IMR-90 (cell line): ENCODE measurements at regions of chr12 and their contacts with region 1.

Region 1: DNA sequence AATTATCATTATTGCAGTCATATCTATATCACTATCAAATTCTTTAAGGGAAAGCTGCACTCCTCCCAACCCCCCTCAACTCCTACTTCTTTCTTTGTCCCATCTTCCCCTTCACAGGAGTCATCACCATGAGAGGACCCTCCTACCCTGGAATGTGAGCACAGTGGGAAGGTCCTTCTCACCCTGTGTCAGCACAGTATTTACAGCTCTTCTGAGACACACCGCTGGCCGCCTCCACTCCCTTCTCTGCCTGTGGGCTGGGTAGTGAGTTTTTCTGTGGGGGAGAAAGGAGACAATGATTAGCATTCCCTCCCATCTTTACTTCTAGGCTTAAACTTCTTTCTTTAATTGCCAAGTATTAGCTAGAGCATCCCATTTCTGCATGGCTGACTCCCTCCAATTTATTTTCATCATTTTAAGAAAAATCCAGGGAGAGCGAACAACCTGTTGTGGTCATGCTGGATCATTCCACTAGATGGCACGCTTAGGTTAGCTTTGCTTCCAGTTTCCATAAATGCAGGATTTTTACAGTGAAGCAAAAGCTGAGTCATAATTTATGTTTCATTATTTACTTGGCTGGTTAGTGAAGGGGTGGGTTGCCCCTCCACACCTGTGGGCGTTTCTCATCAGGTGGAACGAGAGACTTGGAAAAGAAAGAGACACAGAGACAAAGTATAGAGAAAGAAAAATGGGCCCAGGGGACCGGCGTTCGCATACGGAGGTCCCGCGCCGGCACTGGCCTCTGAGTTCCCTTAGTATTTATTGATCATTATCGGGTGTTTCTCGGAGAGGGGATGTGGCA is 188.5 kb downstream of the ALX1 start:
- DNase-seq: peak; percentile 68
- ATAC-seq: peak; percentile 95
- H3K4me3 ChIP-seq: peak overlapping the region; percentile 39
- H3K27ac ChIP-seq: no peak overlapping the region
- H3K4me1 ChIP-seq: no peaks in the 10 kb centered on the region
- H3K27me3 ChIP-seq: no peaks in the 10 kb centered on the region
- CTCF ChIP-seq: peak; percentile 94
- POLR2A ChIP-seq: no peak
- RAD21 ChIP-seq: peak; percentile 93

Region 2: DNA sequence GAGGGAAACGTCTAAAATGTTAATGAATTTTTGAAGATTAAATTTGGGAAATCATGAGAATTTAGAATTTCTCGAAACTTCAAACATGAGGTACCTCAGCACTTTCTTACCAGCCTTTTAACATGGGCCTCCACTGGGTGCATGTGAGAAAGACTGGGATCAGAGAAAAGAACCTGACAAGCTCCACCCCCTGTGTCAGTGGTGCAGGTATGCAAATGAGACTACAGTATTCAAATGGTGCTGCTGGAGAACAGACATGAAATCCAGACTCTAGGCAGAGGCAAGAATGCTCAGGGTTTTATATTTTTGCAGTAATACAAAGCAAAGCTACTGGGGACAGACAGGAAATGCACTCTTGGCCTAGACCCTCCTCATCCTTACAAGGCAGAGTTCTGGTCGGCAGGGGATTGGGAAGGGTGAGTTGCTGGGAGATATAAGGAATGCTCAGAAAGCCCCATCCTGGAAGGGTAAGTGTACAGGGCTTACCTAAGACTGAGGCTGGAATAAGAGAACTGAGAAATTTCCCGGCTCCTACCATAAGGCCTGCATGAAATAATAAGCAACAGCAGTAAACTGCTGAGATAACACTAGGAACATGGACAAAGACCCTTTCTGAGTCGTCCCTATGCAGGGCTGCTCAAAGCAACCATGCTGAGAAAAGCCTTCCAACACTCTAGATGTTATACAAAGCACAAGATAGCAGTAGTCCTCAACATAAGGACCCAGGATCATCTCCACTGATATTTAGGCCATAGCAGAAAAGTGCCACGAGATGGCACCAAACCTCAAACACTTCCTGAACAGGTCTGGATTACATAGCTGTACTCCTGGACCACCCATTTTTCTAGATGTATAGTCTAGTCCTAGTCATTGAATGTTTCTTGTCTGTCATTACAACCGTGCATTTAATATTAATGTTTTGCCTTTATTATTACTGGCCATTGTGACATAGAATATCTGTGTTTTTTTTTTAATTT is 106.9 kb after region 1 on chr12:
- CTCF ChIA-PET with region 1: interaction called, 3 read pairs
- POLR2A ChIA-PET with region 1: no interaction called
- dilution Hi-C with region 1: no loop called
- in situ Hi-C with region 1: no loop called
- intact Hi-C with region 1: loop called (anchors 5 kb)
- DNase-seq: peak; percentile 64
- ATAC-seq: peak; percentile 97
- H3K4me3 ChIP-seq: no peak overlapping the region
- H3K27ac ChIP-seq: no peak overlapping the region
- H3K4me1 ChIP-seq: no peaks in the 10 kb centered on the region
- H3K27me3 ChIP-seq: no peaks in the 10 kb centered on the region
- CTCF ChIP-seq: peak; percentile 77
- POLR2A ChIP-seq: no peak
- RAD21 ChIP-seq: peak; percentile 76

Region 3: DNA sequence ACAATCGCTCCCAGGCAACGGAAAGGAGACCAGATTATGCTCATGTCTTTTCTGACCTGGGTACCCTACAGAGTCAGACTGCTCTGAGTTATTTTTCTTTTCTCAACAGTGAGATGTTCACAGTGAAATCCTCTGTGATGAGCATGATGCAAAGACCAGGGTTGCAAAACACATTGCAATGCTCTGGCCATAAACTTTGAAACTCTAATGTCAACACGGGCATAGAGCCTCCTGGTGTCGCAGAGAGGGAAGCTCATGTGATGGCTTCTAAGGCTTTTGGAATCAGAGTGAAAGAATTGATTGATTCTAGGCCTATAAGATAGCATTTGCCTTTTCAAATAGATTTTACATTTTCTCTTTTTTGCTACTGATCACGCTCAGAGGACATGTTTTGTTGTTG is 174.3 kb after region 1 on chr12:
- CTCF ChIA-PET with region 1: no interaction called
- POLR2A ChIA-PET with region 1: no interaction called
- dilution Hi-C with region 1: no loop called
- in situ Hi-C with region 1: no loop called
- intact Hi-C with region 1: loop called (anchors 5 kb)
- DNase-seq: peak; percentile 78
- ATAC-seq: peak; percentile 98
- H3K4me3 ChIP-seq: no peak overlapping the region
- H3K27ac ChIP-seq: no peak overlapping the region
- H3K4me1 ChIP-seq: no peaks in the 10 kb centered on the region
- H3K27me3 ChIP-seq: no peaks in the 10 kb centered on the region
- CTCF ChIP-seq: peak; percentile 61
- POLR2A ChIP-seq: no peak
- RAD21 ChIP-seq: peak; percentile 51

Region 4: GRCh38 chr12:85866986-85867776 is 398.6 kb after region 1 on chr12:
- CTCF ChIA-PET with region 1: interaction called, 15 read pairs
- POLR2A ChIA-PET with region 1: no interaction called
- dilution Hi-C with region 1: no loop called
- in situ Hi-C with region 1: loop called (anchors 5 kb)
- intact Hi-C with region 1: loop called (anchors 1 kb)
- DNase-seq: peak; percentile 61
- ATAC-seq: peak; percentile 92
- H3K4me3 ChIP-seq: no peak overlapping the region
- H3K27ac ChIP-seq: no peak overlapping the region
- H3K4me1 ChIP-seq: no peaks in the 10 kb centered on the region
- H3K27me3 ChIP-seq: no peaks in the 10 kb centered on the region
- CTCF ChIP-seq: peak; percentile 79
- POLR2A ChIP-seq: no peak
- RAD21 ChIP-seq: peak; percentile 79

Region 5: DNA sequence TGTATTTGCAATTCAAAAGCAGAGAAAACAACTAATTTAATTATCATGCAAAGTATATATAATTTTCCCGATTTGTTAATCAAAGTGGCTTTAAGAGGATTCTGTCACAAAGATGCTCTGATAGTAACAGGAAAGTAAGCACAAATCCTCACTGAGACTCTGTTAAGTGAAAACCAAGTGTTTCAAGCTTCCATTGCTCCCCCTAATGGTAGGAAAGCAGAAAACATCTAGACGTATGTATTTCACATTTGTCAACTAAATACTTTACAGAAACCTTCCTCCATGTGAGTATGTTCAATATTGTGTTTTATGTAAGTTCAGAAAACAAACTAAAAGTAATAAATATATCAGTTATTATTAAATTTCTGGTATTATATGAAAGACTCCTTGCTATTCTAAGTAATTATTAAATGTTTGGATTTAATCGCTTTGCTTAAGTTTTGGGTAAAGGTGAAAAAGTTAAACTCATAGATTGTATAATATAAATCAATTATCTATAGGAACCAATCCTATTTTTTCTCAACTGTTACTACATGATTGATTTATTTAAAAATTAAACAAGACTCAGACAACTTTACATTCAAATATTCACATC is 404.0 kb after region 1 on chr12:
- CTCF ChIA-PET with region 1: interaction called, 15 read pairs
- POLR2A ChIA-PET with region 1: no interaction called
- dilution Hi-C with region 1: no loop called
- in situ Hi-C with region 1: loop called (anchors 5 kb)
- intact Hi-C with region 1: loop called (anchors 1 kb)
- DNase-seq: peak; percentile 64
- ATAC-seq: peak; percentile 61
- H3K4me3 ChIP-seq: no peak overlapping the region
- H3K27ac ChIP-seq: no peak overlapping the region
- H3K4me1 ChIP-seq: no peaks in the 10 kb centered on the region
- H3K27me3 ChIP-seq: no peaks in the 10 kb centered on the region
- CTCF ChIP-seq: peak; percentile 73
- POLR2A ChIP-seq: no peak
- RAD21 ChIP-seq: peak; percentile 60

Region 6: GRCh38 chr12:85920324-85920947 is 451.9 kb after region 1 on chr12:
- CTCF ChIA-PET with region 1: interaction called, 5 read pairs
- POLR2A ChIA-PET with region 1: no interaction called
- dilution Hi-C with region 1: no loop called
- in situ Hi-C with region 1: no loop called
- intact Hi-C with region 1: loop called (anchors 1 kb)
- DNase-seq: peak; percentile 6
- ATAC-seq: no peak; the same call in 1 of the 2 replicates
- H3K4me3 ChIP-seq: no peak overlapping the region
- H3K27ac ChIP-seq: no peak overlapping the region
- H3K4me1 ChIP-seq: no peaks in the 10 kb centered on the region
- H3K27me3 ChIP-seq: no peaks in the 10 kb centered on the region
- CTCF ChIP-seq: peak; percentile 56
- POLR2A ChIP-seq: no peak
- RAD21 ChIP-seq: peak; percentile 32